ENCODE measurements at regions of chr10 and their contacts with region 1.

Region 1: GRCh38 chr10:11986593-11987216 is 55.9 kb downstream of the UPF2 start:
- DNase-seq: peak in 3 of 4 donors; percentile 71 to 86 (median 73)
- ATAC-seq: peak; percentile 96
- H3K4me3 ChIP-seq: no peak overlapping the region
- H3K27ac ChIP-seq: no peak overlapping the region
- H3K4me1 ChIP-seq: peaks cover 0 to 4% of the 10 kb centered on the region in 2 donors
- H3K27me3 ChIP-seq: no peaks in the 10 kb centered on the region
- CTCF ChIP-seq: peak; percentile 70 to 77

Region 2: DNA sequence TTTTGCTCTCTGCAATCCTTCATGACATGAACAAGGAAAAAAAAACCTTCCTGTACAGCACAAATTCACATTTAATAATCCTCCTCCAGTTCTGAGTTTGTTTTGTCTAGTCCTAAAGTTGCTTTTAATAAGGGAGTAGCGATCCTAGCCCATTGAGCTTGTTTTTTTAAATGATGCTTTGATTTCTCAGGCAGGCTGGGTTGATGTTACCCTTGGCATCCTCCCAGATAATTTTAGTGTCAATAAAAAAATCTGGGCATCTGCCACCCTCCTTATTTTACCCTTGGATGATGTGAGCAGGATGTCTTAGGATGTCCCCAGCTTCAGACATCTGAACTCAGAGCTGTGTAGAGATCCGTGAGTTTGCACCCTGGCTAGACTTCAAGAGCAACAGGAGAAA is 197.4 kb before region 1 on chr10:
- intact Hi-C with region 1: loop called in 1 of 2 experiments (anchors 5 kb)
- DNase-seq: no peak
- ATAC-seq: no peak
- H3K4me3 ChIP-seq: no peak overlapping the region
- H3K27ac ChIP-seq: no peak overlapping the region
- H3K4me1 ChIP-seq: no peaks in the 10 kb centered on the region
- H3K27me3 ChIP-seq: no peaks in the 10 kb centered on the region
- CTCF ChIP-seq: no peak